ENCODE measurements at regions of chr3 and their contacts with region 1.

Region 1: GRCh38 chr3:9749645-9750555 is at the start of gene OGG1:
- DNase-seq: peak; percentile 97 to 98
- H3K4me3 ChIP-seq: peak within 1 kb of the TSS; percentile 94
- H3K4me3 Mint-ChIP-seq: peak within 1 kb of the TSS; percentile 88
- H3K27ac Mint-ChIP-seq: peak within 1 kb of the TSS; percentile 89
- H3K4me1 ChIP-seq: peaks cover 8% of the 10 kb centered on the region; the same call in 1 of the 2 replicates
- H3K4me1 Mint-ChIP-seq: no peaks in the 10 kb centered on the region
- H3K27me3 ChIP-seq: no peaks in the 10 kb centered on the region
- H3K27me3 Mint-ChIP-seq: no peaks in the 10 kb centered on the region
- CTCF ChIP-seq: peak in 1 of 2 experiments; percentile 29
- total RNA-seq, gene OGG1: 24.1 and 25.3 TPM in 2 replicates

Region 2: DNA sequence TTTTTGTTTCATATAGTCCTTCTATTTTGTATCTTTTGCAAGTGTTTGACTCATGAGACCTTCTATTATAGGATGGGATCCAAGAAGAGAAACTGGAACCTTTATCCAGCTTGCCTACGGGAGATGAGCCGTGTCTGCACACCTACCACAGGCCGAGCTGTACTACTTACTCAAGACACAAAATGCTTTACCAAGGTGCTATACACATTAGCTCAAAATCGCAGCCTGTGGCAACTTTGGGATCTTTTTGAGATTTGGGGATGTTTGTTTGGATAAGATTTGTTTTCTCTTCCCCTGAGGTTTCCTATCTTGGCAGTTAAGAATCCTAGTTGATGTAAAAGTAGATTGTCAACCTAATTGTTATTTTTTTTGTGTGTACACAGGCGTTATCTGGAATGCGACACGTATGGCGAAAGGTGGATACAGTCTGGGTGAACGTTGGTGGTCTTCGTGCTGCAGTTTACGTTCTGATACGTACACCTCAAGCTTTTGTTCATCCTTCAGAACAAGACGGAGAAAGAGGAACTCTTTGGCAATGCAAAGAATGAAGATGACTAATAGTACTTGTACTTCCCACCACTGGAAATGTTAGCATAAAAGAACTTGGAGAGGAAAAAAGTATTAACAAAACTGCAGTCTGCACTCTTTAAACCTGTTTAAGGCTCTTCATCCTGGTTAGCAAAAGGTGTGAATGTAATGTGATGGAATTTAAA is 365.6 kb before region 1 on chr3:
- CTCF ChIA-PET with region 1: no interaction called
- POLR2A ChIA-PET with region 1: interaction called, 11 read pairs
- intact Hi-C with region 1: no loop called
- DNase-seq: no peak
- H3K4me3 ChIP-seq: no peak overlapping the region
- H3K4me3 Mint-ChIP-seq: no peak overlapping the region
- H3K27ac Mint-ChIP-seq: peak overlapping the region; percentile 1
- H3K4me1 ChIP-seq: no peaks in the 10 kb centered on the region
- H3K4me1 Mint-ChIP-seq: peaks cover 12% of the 10 kb centered on the region
- H3K27me3 ChIP-seq: no peaks in the 10 kb centered on the region
- H3K27me3 Mint-ChIP-seq: no peaks in the 10 kb centered on the region
- CTCF ChIP-seq: no peak

Region 3: DNA sequence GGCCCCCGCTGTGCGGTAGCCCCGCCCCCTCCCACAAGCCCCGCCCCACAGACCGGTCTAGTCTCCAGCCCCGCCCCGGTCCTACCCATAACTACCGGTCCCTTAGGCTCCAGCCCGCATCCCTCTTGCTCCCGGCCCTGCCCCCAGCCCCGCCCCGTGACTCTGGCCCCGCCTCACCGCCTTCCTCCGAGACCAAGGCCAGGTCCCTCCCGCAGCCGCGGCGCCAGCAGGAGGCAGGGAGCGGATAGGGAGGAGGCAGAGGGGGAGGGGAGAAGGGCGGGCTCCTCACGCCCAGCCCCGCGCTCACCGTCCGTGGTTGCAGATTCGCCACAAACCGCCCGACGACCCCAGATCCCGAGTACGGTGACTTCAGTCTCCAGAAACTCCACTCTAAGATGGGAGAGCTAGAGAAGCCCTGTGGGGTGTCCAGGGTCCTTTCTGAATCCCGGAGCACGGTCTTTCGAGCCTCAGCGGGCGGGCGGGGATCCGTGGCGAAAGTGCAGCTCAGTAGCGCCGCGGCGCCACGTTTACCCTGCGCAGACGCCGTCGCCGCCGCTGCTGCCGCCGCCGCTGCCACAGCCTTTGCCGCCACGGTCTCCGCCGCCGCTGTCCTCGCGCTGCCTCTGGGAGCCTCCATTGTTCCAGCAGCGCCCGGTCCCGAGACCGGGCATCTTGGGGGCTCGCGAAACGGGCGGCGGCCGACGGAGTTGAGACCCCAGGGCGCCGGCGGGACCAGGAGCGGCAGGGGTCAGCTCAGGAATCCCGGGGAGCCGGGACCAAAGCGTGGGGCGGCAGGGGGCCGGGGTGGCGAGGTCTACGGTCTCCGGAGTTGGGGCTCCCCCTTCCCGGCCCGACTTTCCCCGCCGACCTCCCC is 18.5 kb before region 1 on chr3 and contains the start of gene BRPF1:
- CTCF ChIA-PET with region 1: interaction called, 7 read pairs
- POLR2A ChIA-PET with region 1: interaction called, 9 read pairs
- intact Hi-C with region 1: loop called (anchors 1 kb)
- DNase-seq: peak; percentile 98 to 99
- H3K4me3 ChIP-seq: peak within 1 kb of the TSS; percentile 85
- H3K4me3 Mint-ChIP-seq: peak within 1 kb of the TSS; percentile 84
- H3K27ac Mint-ChIP-seq: peak within 1 kb of the TSS; percentile 83
- H3K4me1 ChIP-seq: peaks cover 7% of the 10 kb centered on the region; the same call in 1 of the 2 replicates
- H3K4me1 Mint-ChIP-seq: peaks cover 23% of the 10 kb centered on the region
- H3K27me3 ChIP-seq: no peaks in the 10 kb centered on the region
- H3K27me3 Mint-ChIP-seq: no peaks in the 10 kb centered on the region
- CTCF ChIP-seq: no peak
- total RNA-seq, gene BRPF1: 24.7 and 26.0 TPM in 2 replicates

Region 4: GRCh38 chr3:9769426-9770275 is 19.8 kb after region 1 on chr3 and contains the start of gene CAMK1:
- CTCF ChIA-PET with region 1: no interaction called
- POLR2A ChIA-PET with region 1: interaction called, 3 read pairs
- intact Hi-C with region 1: loop called (anchors 2 kb)
- DNase-seq: peak; percentile 69 to 77
- H3K4me3 ChIP-seq: peak within 1 kb of the TSS; percentile 62
- H3K4me3 Mint-ChIP-seq: peak within 1 kb of the TSS; percentile 61
- H3K27ac Mint-ChIP-seq: peak within 1 kb of the TSS; percentile 0
- H3K4me1 ChIP-seq: peaks cover 8% of the 10 kb centered on the region
- H3K4me1 Mint-ChIP-seq: peaks cover 7% of the 10 kb centered on the region
- H3K27me3 ChIP-seq: no peaks in the 10 kb centered on the region
- H3K27me3 Mint-ChIP-seq: no peaks in the 10 kb centered on the region
- CTCF ChIP-seq: no peak
- total RNA-seq, gene CAMK1: 9.7 and 11.9 TPM in 2 replicates

Region 5: DNA sequence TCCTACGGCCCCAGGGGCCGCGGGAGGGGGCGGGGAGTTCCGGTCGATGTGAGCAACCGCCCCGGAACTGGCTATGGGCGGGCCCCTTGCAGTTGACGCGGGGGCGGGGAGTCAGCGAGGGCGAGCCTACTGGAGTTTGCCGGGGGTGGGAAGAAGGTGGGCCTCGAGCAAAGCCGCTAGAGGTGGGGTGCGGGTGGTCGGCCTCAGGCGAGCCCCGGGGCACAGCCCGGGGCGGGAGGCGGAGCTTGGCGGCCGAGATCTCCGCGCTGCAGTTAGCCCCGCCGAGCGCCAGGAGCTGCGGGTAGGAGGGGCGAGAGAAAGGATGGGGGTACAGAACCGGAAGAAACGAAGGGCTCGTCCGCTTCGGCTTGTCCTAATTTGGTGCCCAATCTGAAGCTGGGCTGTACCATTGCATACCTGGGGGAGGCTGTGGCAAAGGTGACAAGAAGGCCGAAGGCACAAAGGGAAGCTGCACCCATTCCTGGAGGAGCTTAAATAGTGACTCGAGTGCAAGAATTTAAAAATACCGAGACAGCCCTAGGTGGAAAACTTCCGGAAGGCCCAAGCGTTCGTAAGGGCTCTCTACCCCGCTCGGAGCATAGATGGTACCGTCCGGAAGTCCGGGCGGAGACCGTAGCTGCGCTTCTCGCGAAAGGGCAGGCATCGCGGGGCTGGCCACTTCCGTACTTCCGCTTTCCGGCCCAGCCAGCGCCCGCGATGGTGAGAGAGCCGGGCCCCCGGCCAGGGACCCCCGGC is 42.7 kb after region 1 on chr3 and contains the starts of genes ARPC4 and TADA3:
- CTCF ChIA-PET with region 1: interaction called, 5 read pairs
- POLR2A ChIA-PET with region 1: interaction called, 14 read pairs
- intact Hi-C with region 1: loop called (anchors 1 kb)
- DNase-seq: peak; percentile 92 to 93
- H3K4me3 ChIP-seq: peak within 1 kb of the TSS; percentile 80
- H3K4me3 Mint-ChIP-seq: peak within 1 kb of the TSS; percentile 92
- H3K27ac Mint-ChIP-seq: peak within 1 kb of the TSS; percentile 100
- H3K4me1 ChIP-seq: 0 out of 2 replicates have a peak, but pooled peaks cover 6% of the 10 kb centered on the region
- H3K4me1 Mint-ChIP-seq: peaks cover 10% of the 10 kb centered on the region
- H3K27me3 ChIP-seq: no peaks in the 10 kb centered on the region
- H3K27me3 Mint-ChIP-seq: no peaks in the 10 kb centered on the region
- CTCF ChIP-seq: no peak
- total RNA-seq, gene ARPC4: 158 and 160 TPM in 2 replicates
- total RNA-seq, gene TADA3: 49.2 and 49.6 TPM in 2 replicates